ENCODE measurements at regions of chr17 and their contacts with region 1.

Region 1: GRCh38 chr17:44141717-44142285 is at the start of gene HROB:
- DNase-seq: peak; percentile 94 to 96 (median 95)
- ATAC-seq: peak; percentile 79 to 90 (median 85)
- H3K4me3 ChIP-seq: peak within 1 kb of the TSS; percentile 54 to 90 (median 69)
- H3K27ac ChIP-seq: peak within 1 kb of the TSS in 7 of 12 donors; percentile 33 to 60 (median 54)
- H3K4me1 ChIP-seq: peaks cover 0 to 36% (median 17%) of the 10 kb centered on the region in 12 donors
- H3K27me3 ChIP-seq: no peaks in the 10 kb centered on the region
- CTCF ChIP-seq: peak; percentile 85 to 95 (median 92)
- POLR2A ChIP-seq: no peak
- total RNA-seq, gene HROB: 0.47 to 5.8 (median 0.84) TPM

Region 2: GRCh38 chr17:43846221-43846712 is 295.5 kb before region 1 on chr17:
- intact Hi-C with region 1: no loop called
- DNase-seq: peak; percentile 85 to 93 (median 88)
- ATAC-seq: peak; percentile 90 to 96 (median 94)
- H3K4me3 ChIP-seq: peak overlapping the region in 6 of 12 donors; percentile 39 to 57 (median 50)
- H3K27ac ChIP-seq: peak overlapping the region; percentile 13 to 81 (median 71)
- H3K4me1 ChIP-seq: peaks cover 0 to 18% (median 8%) of the 10 kb centered on the region in 12 donors
- H3K27me3 ChIP-seq: no peaks in the 10 kb centered on the region
- CTCF ChIP-seq: peak; percentile 95 to 99 (median 98)
- POLR2A ChIP-seq: no peak

Region 3: DNA sequence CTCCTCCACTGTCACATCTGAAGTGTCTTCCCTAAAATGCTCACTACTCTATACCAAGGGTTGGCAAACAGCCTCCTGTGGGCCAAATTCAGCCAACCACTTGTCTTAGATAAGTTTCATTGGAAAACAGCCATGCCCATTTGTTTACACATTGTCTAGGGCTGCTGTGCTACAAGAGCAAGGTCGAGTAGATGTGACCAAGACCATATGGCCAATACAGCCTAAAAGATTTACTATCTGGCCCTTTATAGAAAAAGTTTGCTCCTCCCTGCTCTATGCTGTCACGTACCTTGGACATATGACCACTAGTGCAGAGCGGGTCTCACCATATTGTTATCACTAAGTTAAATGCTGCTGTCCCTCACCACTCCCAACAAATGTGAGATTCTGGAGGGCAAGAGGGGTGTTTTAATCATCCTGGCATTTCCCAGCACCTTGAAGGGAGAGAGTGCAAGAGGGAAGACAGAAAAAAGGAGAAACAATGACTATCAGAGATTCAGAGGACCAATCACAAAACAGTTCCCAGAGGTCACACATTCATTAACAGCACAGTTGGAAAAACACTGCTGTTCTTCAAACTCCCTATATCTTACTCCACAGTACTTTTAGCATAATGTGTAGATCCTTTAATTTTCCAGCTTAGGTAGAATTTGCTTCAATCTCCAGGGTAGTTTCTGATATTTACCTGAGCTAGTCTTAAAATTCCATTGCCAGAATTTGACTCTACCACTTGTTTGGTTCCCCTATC is 88.5 kb before region 1 on chr17:
- intact Hi-C with region 1: no loop called
- DNase-seq: peak in 2 of 5 donors; percentile 32 to 45
- ATAC-seq: peak; percentile 78 to 93 (median 86)
- H3K4me3 ChIP-seq: no peak overlapping the region
- H3K27ac ChIP-seq: peak overlapping the region in 9 of 12 donors; percentile 6 to 67 (median 51)
- H3K4me1 ChIP-seq: peaks cover 0 to 24% (median 11%) of the 10 kb centered on the region in 12 donors
- H3K27me3 ChIP-seq: no peaks in the 10 kb centered on the region
- CTCF ChIP-seq: no peak
- POLR2A ChIP-seq: no peak

Region 4: GRCh38 chr17:44123356-44124117 is 18.3 kb before region 1 on chr17 and contains the start of gene HDAC5:
- intact Hi-C with region 1: loop called in 1 of 10 experiments (anchors 2 kb)
- DNase-seq: peak; percentile 97 to 98 (median 98)
- ATAC-seq: peak; percentile 98 to 99 (median 98)
- H3K4me3 ChIP-seq: peak within 1 kb of the TSS; percentile 86 to 100 (median 99)
- H3K27ac ChIP-seq: peak within 1 kb of the TSS; percentile 88 to 99 (median 94)
- H3K4me1 ChIP-seq: peaks cover 0 to 55% (median 39%) of the 10 kb centered on the region in 12 donors
- H3K27me3 ChIP-seq: no peaks in the 10 kb centered on the region
- CTCF ChIP-seq: peak; percentile 46 to 85 (median 64)
- POLR2A ChIP-seq: peak; percentile 79 to 90
- total RNA-seq, gene HDAC5: 54.6 to 283 (median 70.1) TPM

Region 5: DNA sequence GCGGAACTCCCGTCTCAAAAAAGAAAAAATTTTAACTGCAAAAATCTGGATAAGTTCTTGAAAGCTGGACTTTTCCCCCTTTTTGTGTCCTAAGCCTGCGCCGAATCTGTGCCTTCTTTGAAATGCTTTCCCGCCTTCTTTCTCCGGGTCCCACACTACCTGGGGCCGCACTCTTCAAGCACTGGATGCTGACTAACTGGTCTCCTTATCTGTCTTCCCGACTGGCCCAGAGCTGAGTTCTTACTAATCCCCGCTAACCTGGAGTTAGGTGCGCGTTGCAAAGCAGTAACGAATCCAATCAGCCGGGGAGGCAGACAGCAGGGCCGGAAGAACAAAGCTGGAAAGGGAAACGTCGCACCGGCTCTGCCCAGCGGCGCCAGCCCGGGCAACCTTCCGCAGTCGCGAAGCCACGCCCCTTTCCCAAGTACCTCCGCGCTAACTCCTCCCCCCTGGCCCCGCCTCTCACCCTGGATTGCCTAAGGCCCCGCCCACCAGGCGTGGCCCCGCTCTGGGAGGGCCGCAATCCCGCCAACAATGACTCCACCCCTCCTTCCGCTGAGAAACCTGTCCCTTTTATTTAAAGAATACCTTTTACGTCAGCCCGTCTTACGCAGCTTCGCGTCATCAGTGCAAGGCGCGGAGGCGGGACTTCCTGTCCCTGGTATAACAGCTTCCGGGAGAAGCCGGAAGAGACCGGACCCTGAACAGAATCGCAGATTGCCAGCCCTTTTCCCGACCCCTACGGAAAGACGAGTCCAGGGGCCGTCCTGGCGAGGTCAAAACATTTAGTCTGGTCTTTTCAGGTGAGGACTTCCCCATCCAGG is 44.7 kb after region 1 on chr17 and contains the start of gene TMUB2:
- intact Hi-C with region 1: loop called in 1 of 10 experiments (anchors 5 kb)
- DNase-seq: peak; percentile 99
- ATAC-seq: peak; percentile 95 to 98 (median 96)
- H3K4me3 ChIP-seq: peak within 1 kb of the TSS; percentile 72 to 99 (median 88)
- H3K27ac ChIP-seq: peak within 1 kb of the TSS; percentile 95 to 100 (median 98)
- H3K4me1 ChIP-seq: peaks cover 0 to 49% (median 22%) of the 10 kb centered on the region in 12 donors
- H3K27me3 ChIP-seq: no peaks in the 10 kb centered on the region
- CTCF ChIP-seq: no peak
- POLR2A ChIP-seq: peak in 1 of 2 donors; percentile 90
- total RNA-seq, gene TMUB2: 18.8 to 37.4 (median 21.8) TPM

Region 6: DNA sequence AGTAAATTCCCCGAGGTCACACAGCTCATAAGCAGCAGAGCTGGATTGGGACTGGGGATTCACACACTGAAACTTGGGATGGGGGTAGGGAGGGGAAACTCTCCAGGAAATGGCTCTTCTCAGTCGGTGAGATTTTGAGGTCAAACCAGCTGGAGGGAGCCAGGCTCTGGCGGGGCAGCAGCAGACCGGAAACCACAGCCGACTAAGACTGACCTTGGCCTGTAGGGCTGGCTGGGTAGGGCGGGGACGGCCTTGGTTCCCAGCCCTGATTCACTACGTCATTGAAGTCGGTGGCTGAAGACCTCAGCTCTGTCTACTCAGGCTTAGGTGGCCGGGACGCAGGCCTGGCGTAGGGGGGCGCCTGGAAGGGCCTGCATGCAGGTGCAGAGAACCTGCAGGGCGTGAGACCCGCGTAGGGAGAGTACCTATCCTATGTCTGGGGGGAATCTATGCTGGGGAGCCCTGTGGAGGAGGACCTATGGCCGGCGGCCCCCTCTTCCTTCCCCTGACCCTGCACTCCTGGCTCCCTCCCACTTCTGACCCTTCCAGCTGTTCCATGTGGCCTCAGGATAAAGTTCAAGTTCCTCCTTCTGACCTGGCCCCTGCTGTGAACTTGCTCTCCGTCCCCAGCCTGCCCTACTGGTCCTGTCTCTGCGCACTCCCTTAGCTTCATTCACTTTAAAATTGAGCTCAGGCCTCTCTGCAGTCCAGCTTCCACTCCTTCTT is 138.0 kb after region 1 on chr17:
- intact Hi-C with region 1: no loop called
- DNase-seq: peak; percentile 86 to 90 (median 88)
- ATAC-seq: peak; percentile 91 to 99 (median 98)
- H3K4me3 ChIP-seq: peak overlapping the region in 1 of 12 donors; percentile 28
- H3K27ac ChIP-seq: peak overlapping the region in 11 of 12 donors; percentile 51 to 89 (median 77)
- H3K4me1 ChIP-seq: peaks cover 0 to 23% (median 16%) of the 10 kb centered on the region in 12 donors
- H3K27me3 ChIP-seq: no peaks in the 10 kb centered on the region
- CTCF ChIP-seq: no peak
- POLR2A ChIP-seq: no peak

Region 7: DNA sequence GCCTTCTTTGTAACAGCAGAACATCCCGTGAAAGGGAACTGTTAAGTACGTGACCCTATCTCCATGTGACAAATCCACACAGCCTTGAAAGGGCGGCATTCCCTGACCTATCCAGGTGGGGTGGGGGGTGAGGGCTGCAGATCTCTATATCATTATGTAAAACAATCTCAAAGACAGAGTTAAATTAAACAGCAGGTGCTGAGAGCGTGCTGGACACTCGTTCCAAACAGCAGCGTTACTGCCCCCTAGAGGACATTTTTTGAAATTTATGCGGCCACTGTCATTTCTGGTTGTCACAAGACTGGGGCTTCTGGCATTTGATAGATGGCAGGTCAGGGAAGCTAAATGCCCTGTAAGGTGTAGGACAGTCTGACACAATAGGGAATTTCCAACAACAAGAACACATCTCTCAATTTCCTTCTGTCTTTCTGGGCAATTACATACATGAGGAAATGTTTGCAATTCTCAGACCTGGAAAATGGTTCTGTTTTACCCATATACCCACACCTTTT is 189.5 kb after region 1 on chr17:
- intact Hi-C with region 1: loop called in 1 of 10 experiments (anchors 5 kb)
- DNase-seq: peak; percentile 57 to 76 (median 66)
- ATAC-seq: peak in 3 of 4 donors; percentile 20 to 48 (median 27)
- H3K4me3 ChIP-seq: no peak overlapping the region
- H3K27ac ChIP-seq: peak overlapping the region in 2 of 12 donors; percentile 10 to 12
- H3K4me1 ChIP-seq: peaks cover 0 to 49% (median 4%) of the 10 kb centered on the region in 12 donors
- H3K27me3 ChIP-seq: no peaks in the 10 kb centered on the region
- CTCF ChIP-seq: peak; percentile 76 to 88 (median 82)
- POLR2A ChIP-seq: no peak

Measured in heart left ventricle (tissue), 16 donors.